ENCODE measurements at regions of chrX and their contacts with region 1.

Region 1: GRCh38 chrX:72634331-72634730 is 61.7 kb upstream of the HDAC8 start:
- DNase-seq: no peak
- H3K4me3 ChIP-seq: no peak overlapping the region
- H3K27ac ChIP-seq: no peak overlapping the region
- H3K4me1 ChIP-seq: no peaks in the 10 kb centered on the region
- H3K27me3 ChIP-seq: no peaks in the 10 kb centered on the region
- CTCF ChIP-seq: no peak

Region 2: GRCh38 chrX:72245461-72246089 is 388.8 kb before region 1 on chrX:
- CTCF ChIA-PET with region 1: no interaction called
- POLR2A ChIA-PET with region 1: no interaction called
- intact Hi-C with region 1: loop called (anchors 10 kb)
- DNase-seq: peak in 1 of 2 experiments; percentile 56
- H3K4me3 ChIP-seq: no peak overlapping the region
- H3K27ac ChIP-seq: no peak overlapping the region
- H3K4me1 ChIP-seq: no peaks in the 10 kb centered on the region
- H3K27me3 ChIP-seq: no peaks in the 10 kb centered on the region
- CTCF ChIP-seq: peak; percentile 82

Region 3: GRCh38 chrX:72572248-72573157 is 61.8 kb before region 1 on chrX and contains the start of gene HDAC8:
- CTCF ChIA-PET with region 1: no interaction called
- POLR2A ChIA-PET with region 1: no interaction called
- intact Hi-C with region 1: loop called (anchors 10 kb)
- DNase-seq: peak; percentile 54 to 66
- H3K4me3 ChIP-seq: peak within 1 kb of the TSS; percentile 84
- H3K27ac ChIP-seq: peak within 1 kb of the TSS; percentile 48
- H3K4me1 ChIP-seq: no peaks in the 10 kb centered on the region
- H3K27me3 ChIP-seq: no peaks in the 10 kb centered on the region
- CTCF ChIP-seq: no peak
- total RNA-seq, gene HDAC8: 52.8 and 61.3 TPM in 2 replicates

Region 4: DNA sequence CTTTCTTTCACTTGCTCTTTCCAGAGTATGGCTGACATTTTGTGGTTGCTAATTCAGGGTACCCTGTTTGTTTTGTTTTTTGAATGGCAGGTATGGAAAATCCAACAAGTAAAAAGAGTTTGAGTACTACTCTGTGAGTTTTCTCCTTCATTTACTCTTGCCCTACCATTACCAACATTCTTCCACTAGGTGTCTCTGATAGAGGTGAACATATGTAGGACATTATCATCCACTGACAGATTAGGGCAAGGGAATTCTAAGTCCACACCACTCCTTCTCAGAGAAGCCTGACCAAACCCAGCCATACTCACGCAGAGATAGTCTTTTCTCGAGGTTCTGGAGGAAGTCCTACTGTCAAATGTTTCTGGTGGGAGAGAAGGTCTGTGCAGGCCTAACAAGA is 25.0 kb before region 1 on chrX:
- CTCF ChIA-PET with region 1: no interaction called
- POLR2A ChIA-PET with region 1: no interaction called
- intact Hi-C with region 1: no loop called
- DNase-seq: no peak
- H3K4me3 ChIP-seq: no peak overlapping the region
- H3K27ac ChIP-seq: no peak overlapping the region
- H3K4me1 ChIP-seq: no peaks in the 10 kb centered on the region
- H3K27me3 ChIP-seq: no peaks in the 10 kb centered on the region
- CTCF ChIP-seq: peak; percentile 43; the same call in 1 of the 2 replicates